ENCODE measurements at regions of chr11 and their contacts with region 1.

Region 1: DNA sequence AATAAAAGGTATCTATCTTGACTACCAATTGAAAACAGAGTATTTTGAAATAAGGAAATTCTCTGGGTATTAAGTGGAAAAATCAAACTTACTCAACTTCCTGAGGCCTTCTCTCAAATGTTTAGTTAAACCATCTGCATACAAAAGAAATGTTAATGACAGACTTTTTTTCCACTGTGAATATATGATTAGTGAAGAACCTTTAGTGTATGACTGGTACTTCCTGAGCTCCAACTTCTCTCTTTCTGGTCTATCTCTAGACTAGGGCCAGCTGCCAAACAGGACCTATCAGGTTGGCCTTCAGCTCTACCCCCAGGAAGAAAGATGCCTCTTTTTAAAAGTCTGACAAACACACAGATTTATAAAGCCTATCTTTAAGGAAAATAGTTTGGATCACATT is 68.8 kb upstream of the SCUBE2 start:
- DNase-seq: no peak
- H3K4me3 Mint-ChIP-seq: no peak overlapping the region
- H3K27ac Mint-ChIP-seq: peak overlapping the region; percentile 69
- H3K4me1 Mint-ChIP-seq: peaks cover 19% of the 10 kb centered on the region
- H3K27me3 Mint-ChIP-seq: no peaks in the 10 kb centered on the region

Region 2: GRCh38 chr11:9396752-9397151 is 236.6 kb after region 1 on chr11:
- intact Hi-C with region 1: loop called (anchors 10 kb)
- DNase-seq: no peak
- H3K4me3 Mint-ChIP-seq: no peak overlapping the region
- H3K27ac Mint-ChIP-seq: peak overlapping the region; percentile 74
- H3K4me1 Mint-ChIP-seq: peaks cover 48% of the 10 kb centered on the region
- H3K27me3 Mint-ChIP-seq: no peaks in the 10 kb centered on the region